CD8-positive, alpha-beta T cell (primary cell): ENCODE measurements at regions of chr2 and their contacts with region 1.

Region 1: DNA sequence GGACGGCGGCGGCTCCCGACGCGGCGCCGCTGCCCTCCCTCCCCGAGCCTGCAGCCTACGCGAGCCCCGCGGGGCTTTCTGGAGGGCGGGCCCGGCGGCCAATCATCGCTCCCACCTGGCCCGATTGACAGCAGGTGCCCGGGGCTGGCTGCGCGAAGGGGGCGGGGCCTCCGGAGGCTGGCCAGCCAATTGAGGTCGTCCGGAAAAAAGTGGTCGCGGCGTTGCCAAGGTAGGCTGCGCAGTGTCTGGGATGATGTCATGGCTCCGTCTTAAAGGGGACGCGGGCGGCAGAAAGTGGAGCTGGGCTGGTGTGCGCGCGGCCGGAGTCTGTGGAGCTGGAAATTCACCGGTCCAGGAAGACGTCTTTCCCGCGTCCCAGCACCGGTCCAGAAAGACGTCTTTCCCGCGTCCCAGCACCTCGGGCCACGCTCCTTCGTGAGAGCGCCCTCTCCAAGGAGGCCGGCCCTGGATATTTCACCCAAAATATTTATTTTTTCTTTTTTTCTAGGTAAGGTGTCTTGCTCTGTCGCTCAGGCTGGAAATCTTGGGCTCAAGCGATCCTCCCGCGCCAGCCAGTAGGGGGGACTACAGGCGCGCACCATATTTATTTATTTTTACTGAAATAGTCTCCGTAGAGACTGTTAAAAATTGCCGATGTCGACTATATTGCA is at the start of gene ACTR1B:
- DNase-seq: peak; percentile 94 to 100 (median 97)
- ATAC-seq: peak; percentile 86
- H3K4me3 ChIP-seq: peak within 1 kb of the TSS; percentile 86 to 93
- H3K4me3 Mint-ChIP-seq: peak within 1 kb of the TSS; percentile 93
- H3K27ac ChIP-seq: peak within 1 kb of the TSS; percentile 94 to 97
- H3K27ac Mint-ChIP-seq: peak within 1 kb of the TSS; percentile 97
- H3K4me1 ChIP-seq: peaks cover 30% of the 10 kb centered on the region
- H3K4me1 Mint-ChIP-seq: peaks cover 28% of the 10 kb centered on the region
- H3K27me3 ChIP-seq: no peaks in the 10 kb centered on the region
- H3K27me3 Mint-ChIP-seq: no peaks in the 10 kb centered on the region
- CTCF ChIP-seq: no peak
- total RNA-seq, gene ACTR1B: 81.9 to 82.1 TPM

Region 2: DNA sequence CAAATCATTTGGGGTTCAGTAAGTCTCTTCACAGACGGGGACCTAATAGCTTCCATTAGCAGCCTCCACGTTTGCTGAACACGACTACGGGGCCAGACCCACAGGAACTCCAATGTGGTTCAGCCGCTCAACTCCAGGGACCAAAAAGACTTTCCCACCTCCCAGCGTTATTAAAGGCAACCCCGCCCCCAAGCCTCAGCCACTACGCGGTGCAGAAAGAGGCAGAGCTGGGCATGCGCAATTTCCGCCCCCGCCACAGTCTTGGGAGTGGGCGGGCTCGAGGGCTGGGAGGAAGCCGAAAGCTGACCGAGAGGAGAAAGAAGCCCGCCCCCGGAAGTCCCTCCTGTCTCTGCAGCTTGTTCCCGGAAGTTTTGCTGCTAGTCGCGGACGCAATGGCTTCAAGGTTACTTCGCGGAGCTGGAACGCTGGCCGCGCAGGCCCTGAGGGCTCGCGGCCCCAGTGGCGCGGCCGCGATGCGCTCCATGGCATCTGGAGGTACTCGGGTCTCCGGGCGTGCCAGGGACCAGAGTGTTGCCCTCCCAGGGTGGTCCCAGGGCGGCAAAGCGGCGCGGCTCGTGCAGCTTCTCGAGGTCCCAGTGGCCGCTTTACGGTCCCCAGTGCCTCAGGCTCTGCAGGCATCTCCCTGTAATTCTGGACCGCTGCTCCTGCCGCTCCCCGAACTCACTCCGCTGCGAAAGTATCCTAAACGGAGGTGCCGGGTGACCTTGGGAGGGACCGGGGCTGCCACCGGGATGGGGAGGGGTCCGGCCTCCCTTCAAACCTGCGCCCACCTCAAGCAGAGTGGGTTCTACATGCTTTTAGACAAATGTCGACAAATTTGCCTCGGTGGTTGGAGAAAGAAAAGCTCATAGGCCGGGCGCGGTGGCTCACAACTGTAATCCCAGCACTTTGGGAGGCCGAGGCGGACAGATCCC is 18.1 kb before region 1 on chr2 and contains the start of gene COX5B:
- CTCF ChIA-PET with region 1: interaction called, 14 read pairs
- POLR2A ChIA-PET with region 1: interaction called, 153 read pairs
- intact Hi-C with region 1: loop called (anchors 1 kb)
- DNase-seq: peak; percentile 97 to 99 (median 99)
- ATAC-seq: peak; percentile 97
- H3K4me3 ChIP-seq: peak within 1 kb of the TSS; percentile 94 to 97
- H3K4me3 Mint-ChIP-seq: peak within 1 kb of the TSS; percentile 91
- H3K27ac ChIP-seq: peak within 1 kb of the TSS; percentile 83 to 90
- H3K27ac Mint-ChIP-seq: peak within 1 kb of the TSS; percentile 95
- H3K4me1 ChIP-seq: peaks cover 20% of the 10 kb centered on the region
- H3K4me1 Mint-ChIP-seq: peaks cover 20% of the 10 kb centered on the region
- H3K27me3 ChIP-seq: no peaks in the 10 kb centered on the region
- H3K27me3 Mint-ChIP-seq: no peaks in the 10 kb centered on the region
- CTCF ChIP-seq: no peak
- total RNA-seq, gene COX5B: 115 to 117 TPM